Panc1 (cell line): ENCODE measurements at regions of chr2 and their contacts with region 1.

Region 1: DNA sequence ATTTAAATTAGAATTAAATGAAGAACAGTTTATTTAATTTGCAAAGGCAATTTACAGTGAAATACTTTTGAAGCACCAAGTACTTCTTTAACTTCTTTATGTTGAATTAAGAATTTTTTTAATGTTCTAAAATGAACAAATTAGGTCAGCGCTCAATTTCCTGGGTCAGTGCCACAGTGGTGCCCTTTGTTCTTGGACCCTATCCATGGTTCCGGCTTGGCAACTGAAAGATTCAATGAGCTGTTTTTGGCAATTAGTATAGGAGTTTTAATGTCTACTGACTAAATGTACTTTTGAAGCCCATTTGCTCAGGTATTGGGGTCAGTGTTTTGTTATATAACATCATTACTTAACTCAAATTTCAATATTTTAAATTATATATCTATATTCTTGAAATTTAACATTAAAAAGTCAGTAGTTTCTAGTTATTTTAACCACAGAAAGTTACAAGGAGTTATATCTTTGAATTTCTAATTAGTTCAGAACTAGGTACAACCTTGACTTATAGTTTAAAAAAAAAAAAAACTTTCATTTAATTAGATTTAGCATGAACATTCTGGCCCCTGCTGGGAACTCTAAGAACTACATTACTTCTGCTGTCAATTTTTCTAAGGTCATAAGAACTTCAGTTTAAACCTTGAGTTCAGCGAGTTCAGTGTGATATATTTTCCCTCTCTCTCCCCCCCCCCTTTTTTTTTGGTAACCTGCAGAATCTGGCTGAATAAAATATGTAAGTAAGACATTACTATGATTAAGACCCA is 7.6 kb upstream of the MSTN start:
- DNase-seq: peak; percentile 47
- ATAC-seq: no peak
- H3K4me3 ChIP-seq: no peak overlapping the region
- H3K27ac ChIP-seq: no peak overlapping the region
- H3K4me1 ChIP-seq: no peaks in the 10 kb centered on the region
- H3K27me3 ChIP-seq: no peaks in the 10 kb centered on the region
- CTCF ChIP-seq: peak; percentile 69; the same call in 1 of the 2 replicates

Region 2: DNA sequence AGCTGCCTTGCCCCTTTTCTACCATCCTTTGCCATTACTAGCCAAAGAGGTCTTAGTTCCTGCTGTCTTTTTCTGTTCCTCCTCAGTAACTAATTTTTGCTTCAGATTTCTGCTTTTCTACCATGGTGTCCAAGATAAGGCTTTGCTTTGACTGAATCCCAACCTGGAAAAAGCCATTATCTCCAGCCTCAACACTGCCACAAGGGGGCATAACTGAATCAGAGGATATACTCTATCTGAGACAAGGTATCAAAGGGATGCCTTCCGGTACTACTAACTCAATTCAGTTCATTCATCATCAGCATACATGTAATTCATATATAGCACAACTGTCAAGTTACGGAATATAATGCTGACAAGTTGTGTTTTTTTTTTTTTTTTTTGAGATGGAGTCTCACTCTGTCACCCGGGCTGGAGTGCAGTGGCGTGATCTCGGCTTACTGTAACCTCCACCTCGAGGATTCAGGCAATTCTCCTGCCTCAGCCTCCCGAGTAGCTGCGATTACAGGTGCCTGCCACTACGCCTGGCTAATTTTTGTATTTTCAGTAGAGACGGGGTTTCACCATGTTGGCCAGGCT is 318.9 kb before region 1 on chr2:
- CTCF ChIA-PET with region 1: no interaction called
- POLR2A ChIA-PET with region 1: no interaction called
- in situ Hi-C with region 1: no loop called
- intact Hi-C with region 1: loop called (anchors 5 kb)
- DNase-seq: no peak
- ATAC-seq: peak; percentile 87
- H3K4me3 ChIP-seq: no peak overlapping the region
- H3K27ac ChIP-seq: no peak overlapping the region
- H3K4me1 ChIP-seq: no peaks in the 10 kb centered on the region
- H3K27me3 ChIP-seq: no peaks in the 10 kb centered on the region
- CTCF ChIP-seq: peak; percentile 81

Region 3: GRCh38 chr2:189798312-189799029 is 271.6 kb before region 1 on chr2:
- CTCF ChIA-PET with region 1: interaction called, 15 read pairs
- POLR2A ChIA-PET with region 1: interaction called, 3 read pairs
- in situ Hi-C with region 1: no loop called
- intact Hi-C with region 1: loop called (anchors 5 kb)
- DNase-seq: no peak
- ATAC-seq: no peak; the same call in 1 of the 2 replicates
- H3K4me3 ChIP-seq: no peak overlapping the region
- H3K27ac ChIP-seq: peak overlapping the region; percentile 54; the same call in 1 of the 2 replicates
- H3K4me1 ChIP-seq: peaks cover 4% of the 10 kb centered on the region; the same call in 1 of the 2 replicates
- H3K27me3 ChIP-seq: no peaks in the 10 kb centered on the region
- CTCF ChIP-seq: peak; percentile 66; the same call in 1 of the 2 replicates

Region 4: GRCh38 chr2:189901695-189902094 is 168.4 kb before region 1 on chr2:
- CTCF ChIA-PET with region 1: no interaction called
- POLR2A ChIA-PET with region 1: no interaction called
- in situ Hi-C with region 1: no loop called
- intact Hi-C with region 1: no loop called
- DNase-seq: no peak
- ATAC-seq: no peak
- H3K4me3 ChIP-seq: no peak overlapping the region
- H3K27ac ChIP-seq: no peak overlapping the region
- H3K4me1 ChIP-seq: no peaks in the 10 kb centered on the region
- H3K27me3 ChIP-seq: 0 out of 2 replicates have a peak, but pooled peaks cover 2% of the 10 kb centered on the region
- CTCF ChIP-seq: no peak

Region 5: DNA sequence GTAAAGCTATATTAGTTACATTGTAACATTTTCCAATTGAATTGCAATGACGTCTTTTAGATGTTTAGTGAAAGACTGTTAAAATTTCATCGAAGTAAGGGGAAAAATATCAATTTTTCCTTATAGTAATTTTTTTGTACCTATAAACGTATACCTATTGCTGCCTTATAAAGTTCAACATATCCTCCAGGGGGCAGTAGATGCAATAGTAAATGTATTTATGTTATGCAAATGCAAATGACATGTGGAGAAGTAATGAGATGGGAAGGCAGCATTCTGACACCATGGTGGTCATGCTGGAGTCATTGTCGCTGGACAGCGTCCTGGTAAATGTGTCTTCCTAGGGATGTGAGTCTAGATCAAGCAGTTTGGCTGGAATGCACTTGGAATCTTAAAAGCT is 46.3 kb before region 1 on chr2:
- CTCF ChIA-PET with region 1: no interaction called
- POLR2A ChIA-PET with region 1: no interaction called
- in situ Hi-C with region 1: no loop called
- intact Hi-C with region 1: loop called (anchors 5 kb)
- DNase-seq: peak; percentile 30
- ATAC-seq: peak; percentile 72; the same call in 1 of the 2 replicates
- H3K4me3 ChIP-seq: no peak overlapping the region
- H3K27ac ChIP-seq: no peak overlapping the region
- H3K4me1 ChIP-seq: no peaks in the 10 kb centered on the region
- H3K27me3 ChIP-seq: peaks cover 7% of the 10 kb centered on the region; the same call in 1 of the 2 replicates
- CTCF ChIP-seq: peak; percentile 59

Region 6: DNA sequence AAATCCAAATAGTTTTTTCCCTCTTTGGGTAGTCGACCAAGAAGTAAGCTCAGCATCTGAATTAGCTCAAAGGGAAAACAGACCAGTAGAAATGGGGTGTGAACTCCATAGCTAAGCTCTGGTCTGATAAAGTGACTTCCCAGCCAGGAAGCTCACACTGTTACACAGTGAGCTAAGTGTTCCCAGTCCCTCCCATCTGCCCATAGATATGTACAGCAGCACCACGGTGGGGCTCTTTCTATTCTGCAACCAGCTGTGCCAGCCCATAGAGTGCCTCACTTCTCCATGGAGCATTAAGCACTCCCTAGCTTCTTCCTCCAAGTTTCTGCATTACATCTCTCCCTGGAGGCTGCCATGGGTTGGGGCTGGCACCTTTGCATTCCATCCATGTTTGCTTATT is 492.0 kb after region 1 on chr2:
- CTCF ChIA-PET with region 1: no interaction called
- POLR2A ChIA-PET with region 1: no interaction called
- in situ Hi-C with region 1: no loop called
- intact Hi-C with region 1: no loop called
- DNase-seq: no peak
- ATAC-seq: no peak
- H3K4me3 ChIP-seq: no peak overlapping the region
- H3K27ac ChIP-seq: no peak overlapping the region
- H3K4me1 ChIP-seq: no peaks in the 10 kb centered on the region
- H3K27me3 ChIP-seq: no peaks in the 10 kb centered on the region
- CTCF ChIP-seq: no peak